Posterior cingulate gyrus (tissue), 11 donors: ENCODE measurements at regions of chr5 and their contacts with region 1.

Region 1: DNA sequence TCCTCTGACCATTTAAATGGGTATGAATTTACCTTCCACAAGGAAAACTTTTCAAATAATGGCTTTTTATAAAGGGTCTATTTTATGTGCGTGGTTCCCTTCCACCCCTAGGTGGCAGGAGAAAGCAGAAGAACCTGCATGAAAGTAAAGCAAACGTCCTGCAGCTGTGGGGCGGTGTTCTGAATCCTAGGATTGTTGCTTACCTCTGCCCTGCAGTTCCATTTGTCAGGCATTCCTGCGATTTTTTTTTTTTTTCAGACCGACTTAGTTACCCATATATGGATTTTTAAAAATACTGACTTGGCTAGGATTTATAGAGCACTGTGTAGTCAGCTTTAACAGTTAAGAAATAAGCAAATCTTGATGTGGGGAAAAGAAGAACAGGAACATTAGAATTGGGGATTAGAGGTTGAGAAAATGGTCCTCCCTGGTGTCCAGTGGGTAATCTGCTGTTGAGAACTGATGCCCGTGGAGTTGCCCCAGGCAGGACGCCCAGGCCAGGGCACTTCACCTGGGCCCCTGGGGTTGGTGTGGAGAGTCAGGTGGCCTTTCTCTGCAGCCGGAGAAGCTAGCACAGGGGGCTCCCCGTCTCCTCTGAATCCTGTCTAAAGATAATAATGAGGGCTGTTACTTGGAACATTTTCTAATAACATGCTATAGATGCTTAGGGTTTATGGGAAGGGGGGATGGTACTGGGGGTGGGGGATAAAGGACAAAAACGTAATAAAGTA is 30.4 kb upstream of the LTC4S start:
- DNase-seq: peak in 7 of 10 donors; percentile 53 to 91 (median 60)

Region 2: DNA sequence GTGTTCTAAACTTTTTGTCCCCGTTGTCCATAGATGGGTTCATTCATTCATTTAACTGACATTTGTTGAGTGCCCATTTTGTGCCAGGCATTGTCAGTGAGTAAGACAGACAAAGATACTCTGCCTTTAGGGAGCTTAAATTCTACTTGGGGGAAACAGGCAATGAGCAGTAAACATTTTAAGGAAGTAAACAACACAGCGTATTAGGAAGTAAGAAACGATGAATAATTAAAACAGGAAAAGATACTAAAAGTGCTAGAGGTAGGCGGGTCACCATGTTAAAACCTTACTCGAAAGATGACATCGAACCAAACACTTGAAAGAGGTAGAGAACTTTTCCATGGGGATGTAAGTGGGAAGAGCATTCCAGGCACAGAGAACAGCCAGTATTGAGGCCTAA is 36.3 kb before region 1 on chr5:
- intact Hi-C with region 1: loop called (anchors 1 kb)
- DNase-seq: no peak

Region 3: DNA sequence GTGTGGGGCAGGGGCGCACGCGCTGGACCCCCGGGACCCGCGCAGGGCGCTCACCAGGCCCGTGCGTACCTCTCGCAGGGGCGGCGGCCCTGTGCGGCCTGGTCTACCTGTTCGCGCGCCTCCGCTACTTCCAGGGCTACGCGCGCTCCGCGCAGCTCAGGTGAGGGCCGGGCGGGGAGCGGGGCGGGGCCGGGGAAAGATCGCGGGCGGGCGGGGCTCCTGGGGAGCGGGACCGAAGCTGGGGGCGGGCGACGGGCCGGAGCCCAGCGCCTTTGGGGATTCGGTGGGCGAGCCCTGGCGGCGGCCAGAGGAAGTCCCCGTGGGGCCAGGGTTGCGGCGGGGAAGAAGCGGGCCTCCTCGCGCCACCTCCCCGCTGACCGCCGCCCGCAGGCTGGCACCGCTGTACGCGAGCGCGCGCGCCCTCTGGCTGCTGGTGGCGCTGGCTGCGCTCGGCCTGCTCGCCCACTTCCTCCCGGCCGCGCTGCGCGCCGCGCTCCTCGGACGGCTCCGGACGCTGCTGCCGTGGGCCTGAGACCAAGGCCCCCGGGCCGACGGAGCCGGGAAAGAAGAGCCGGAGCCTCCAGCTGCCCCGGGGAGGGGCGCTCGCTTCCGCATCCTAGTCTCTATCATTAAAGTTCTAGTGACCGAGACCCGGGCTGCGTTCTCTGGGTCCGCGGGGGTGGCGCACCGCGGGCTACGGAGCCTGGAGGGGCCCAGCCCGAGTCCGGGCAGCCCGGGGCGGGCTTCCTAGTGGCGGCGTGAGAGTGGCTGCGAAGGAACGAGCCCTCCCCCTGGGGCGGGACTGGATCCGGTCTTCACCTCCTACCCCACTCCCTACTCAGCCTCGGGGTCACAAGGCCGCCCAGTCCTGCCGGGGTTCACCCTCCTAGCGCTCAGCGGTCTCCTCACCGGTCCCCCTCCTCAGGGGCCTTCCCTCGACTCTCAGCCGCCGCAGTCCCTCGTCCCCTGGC is 32.8 kb after region 1 on chr5:
- intact Hi-C with region 1: loop called (anchors 5 kb)
- DNase-seq: peak; percentile 64 to 96 (median 76)